Panc1 (cell line): ENCODE measurements at regions of chr16 and their contacts with region 1.

Region 1: DNA sequence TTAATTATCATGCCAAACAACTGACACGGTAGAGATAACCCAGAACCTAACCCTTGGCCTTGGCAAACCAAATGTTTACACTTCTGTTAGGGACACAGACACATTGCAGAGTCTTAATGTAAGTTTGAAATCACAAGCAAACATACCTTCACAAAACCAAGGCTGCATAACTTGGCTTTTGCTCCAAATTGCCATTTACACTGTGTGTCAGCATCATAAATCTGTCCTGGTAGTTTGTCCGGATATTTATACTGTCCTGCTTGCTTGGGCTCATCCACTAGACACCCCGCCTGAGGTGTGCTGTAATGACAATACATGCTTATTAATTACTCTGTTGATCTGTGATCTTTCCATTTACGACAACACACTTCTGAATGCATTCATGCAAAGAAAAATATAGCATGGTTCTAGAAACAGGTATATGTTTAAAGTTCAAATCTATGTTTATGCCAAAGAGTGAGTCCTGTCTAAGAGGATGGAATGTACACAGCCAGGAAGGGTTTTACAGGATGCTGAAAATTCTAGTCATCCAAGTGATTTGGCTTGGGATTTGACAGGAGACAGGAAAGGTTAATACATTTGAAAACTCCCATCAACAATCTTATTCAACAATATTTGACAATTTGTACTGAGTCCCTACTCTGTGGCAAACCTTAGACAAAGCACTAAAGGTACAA is 81.1 kb downstream of the ADAMTS18 start:
- DNase-seq: peak; percentile 55
- ATAC-seq: peak; percentile 96
- H3K4me3 ChIP-seq: no peak overlapping the region
- H3K27ac ChIP-seq: peak overlapping the region; percentile 89
- H3K4me1 ChIP-seq: peaks cover 13% of the 10 kb centered on the region
- H3K27me3 ChIP-seq: no peaks in the 10 kb centered on the region
- CTCF ChIP-seq: no peak

Region 2: GRCh38 chr16:77298638-77299360 is 54.9 kb before region 1 on chr16:
- CTCF ChIA-PET with region 1: no interaction called
- POLR2A ChIA-PET with region 1: no interaction called
- in situ Hi-C with region 1: no loop called
- intact Hi-C with region 1: loop called (anchors 5 kb)
- DNase-seq: peak; percentile 87
- ATAC-seq: peak; percentile 97
- H3K4me3 ChIP-seq: peak overlapping the region in 1 of 2 experiments; percentile 11; a peak in 2 of 4 replicates
- H3K27ac ChIP-seq: peak overlapping the region; percentile 98
- H3K4me1 ChIP-seq: peaks cover 27% of the 10 kb centered on the region
- H3K27me3 ChIP-seq: no peaks in the 10 kb centered on the region
- CTCF ChIP-seq: no peak